AG04449 (cell line): ENCODE measurements at regions of chr15 and their contacts with region 1.

Region 1: DNA sequence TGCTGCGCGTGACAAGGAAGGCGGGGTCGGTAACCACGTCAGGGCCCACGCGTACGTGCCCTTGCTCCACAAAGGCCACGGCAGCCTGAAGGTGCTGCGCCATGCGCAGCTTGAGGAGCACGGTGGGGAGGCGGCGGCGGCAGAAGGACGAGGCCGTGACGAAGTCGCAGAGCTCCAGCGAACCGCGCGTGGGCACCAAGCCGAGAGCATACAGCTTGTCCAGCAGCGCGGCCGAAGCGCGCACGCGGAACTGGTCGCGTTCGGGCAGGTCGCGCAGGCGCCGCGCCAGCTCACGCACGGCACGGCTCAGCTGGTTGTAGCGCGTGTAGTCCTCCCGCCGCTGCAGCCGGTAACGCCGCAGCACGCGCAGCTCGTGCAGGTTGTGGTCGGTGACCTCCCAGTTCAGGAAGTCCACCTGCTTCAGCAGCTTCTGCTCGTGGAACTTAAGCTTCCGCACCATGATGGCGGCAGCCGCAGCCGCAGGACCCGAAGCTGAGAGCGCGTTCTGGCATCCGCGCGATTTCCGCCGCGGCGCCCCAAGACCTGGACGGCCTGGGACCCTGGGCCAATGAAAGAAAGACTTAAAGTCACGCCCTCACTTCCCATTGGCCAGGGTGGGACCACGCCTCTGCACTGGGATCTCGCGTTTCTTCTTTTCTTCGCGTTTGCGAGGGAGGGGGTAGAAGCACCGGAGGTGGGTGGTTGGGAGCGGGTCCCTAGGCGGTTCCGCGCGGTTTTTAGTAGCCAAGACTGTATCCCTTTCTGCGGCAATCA is at the start of gene IMP3:
- DNase-seq: no peak
- H3K4me3 ChIP-seq: peak within 1 kb of the TSS; percentile 99
- CTCF ChIP-seq: no peak

Region 2: DNA sequence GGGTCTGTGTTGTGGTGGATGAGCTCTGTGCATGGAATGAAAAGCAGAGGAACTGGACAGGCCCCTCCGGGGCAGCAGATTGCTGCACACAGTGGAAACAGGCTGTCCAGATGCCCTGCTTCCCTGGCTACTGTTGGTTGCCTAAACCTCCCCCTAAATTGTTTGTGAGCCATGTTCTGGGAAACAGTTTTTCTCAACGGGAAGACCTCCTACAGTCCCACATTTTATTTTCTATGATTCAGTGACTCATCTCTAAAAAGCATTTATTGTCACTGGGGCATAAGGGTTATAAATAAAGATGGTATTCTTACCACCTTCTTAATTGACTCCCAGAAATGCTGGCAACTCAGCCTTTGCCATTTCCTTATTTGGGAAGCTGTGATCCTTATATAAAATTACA is 40.5 kb before region 1 on chr15:
- CTCF ChIA-PET with region 1: no interaction called
- POLR2A ChIA-PET with region 1: no interaction called
- DNase-seq: no peak
- H3K4me3 ChIP-seq: no peak overlapping the region
- CTCF ChIP-seq: no peak

Region 3: GRCh38 chr15:75625542-75626347 is 14.2 kb before region 1 on chr15 and contains the start of gene SNUPN:
- CTCF ChIA-PET with region 1: interaction called, 26 read pairs
- POLR2A ChIA-PET with region 1: interaction called, 18 read pairs
- DNase-seq: no peak
- H3K4me3 ChIP-seq: peak within 1 kb of the TSS; percentile 88
- CTCF ChIP-seq: no peak

Region 4: GRCh38 chr15:75661091-75661777 is 21.3 kb after region 1 on chr15:
- CTCF ChIA-PET with region 1: interaction called, 11 read pairs
- POLR2A ChIA-PET with region 1: interaction called, 11 read pairs
- DNase-seq: peak; percentile 83
- H3K4me3 ChIP-seq: peak overlapping the region; percentile 23
- CTCF ChIP-seq: no peak

Region 5: GRCh38 chr15:75733761-75734651 is 94.1 kb after region 1 on chr15:
- CTCF ChIA-PET with region 1: no interaction called
- POLR2A ChIA-PET with region 1: no interaction called
- DNase-seq: no peak
- H3K4me3 ChIP-seq: no peak overlapping the region
- CTCF ChIP-seq: no peak

Region 6: GRCh38 chr15:75785771-75786574 is 146.1 kb after region 1 on chr15:
- CTCF ChIA-PET with region 1: no interaction called
- POLR2A ChIA-PET with region 1: no interaction called
- DNase-seq: no peak
- H3K4me3 ChIP-seq: no peak overlapping the region
- CTCF ChIP-seq: no peak